ENCODE measurements at regions of chr5 and their contacts with region 1.

Region 1: DNA sequence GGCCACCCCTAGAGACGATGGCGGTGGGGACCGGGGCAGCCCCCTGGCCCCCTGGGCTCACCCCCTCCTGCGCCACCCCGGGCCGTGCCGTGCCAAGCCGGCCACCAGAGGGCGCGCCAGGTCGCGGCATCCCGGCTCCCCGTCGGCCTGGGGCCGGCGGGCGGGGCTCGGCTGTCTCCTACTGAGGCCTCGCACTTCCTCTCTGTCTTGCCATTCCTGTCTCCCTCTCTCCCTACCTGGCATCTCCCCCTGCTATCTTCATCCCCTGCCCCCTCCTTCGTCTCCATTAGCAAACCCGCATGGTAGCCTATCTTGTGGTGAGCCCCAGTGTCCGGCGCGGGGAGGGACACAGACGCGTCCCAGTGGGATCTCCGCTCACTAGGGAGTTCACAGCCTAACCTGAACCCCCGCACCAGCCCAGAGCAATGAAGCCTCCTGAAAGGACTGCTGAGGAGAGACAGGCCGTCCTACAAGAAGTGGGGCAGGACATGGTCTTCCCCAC is 29.8 kb upstream of the FABP6 start:
- DNase-seq: peak; percentile 21 to 30
- ATAC-seq: peak; percentile 83 to 84
- H3K4me3 ChIP-seq: peak overlapping the region; percentile 39 to 61 (median 55)
- H3K27ac ChIP-seq: no peak overlapping the region
- H3K4me1 ChIP-seq: peaks cover 0 to 4% of the 10 kb centered on the region in 2 donors
- H3K27me3 ChIP-seq: no peaks in the 10 kb centered on the region
- CTCF ChIP-seq: peak; percentile 72 to 94 (median 88)
- POLR2A ChIP-seq: no peak

Region 2: GRCh38 chr5:160390787-160391696 is 191.6 kb after region 1 on chr5:
- in situ Hi-C with region 1: no loop called
- intact Hi-C with region 1: loop called (anchors 2 kb)
- DNase-seq: no peak
- ATAC-seq: no peak
- H3K4me3 ChIP-seq: no peak overlapping the region
- H3K27ac ChIP-seq: no peak overlapping the region
- H3K4me1 ChIP-seq: peaks cover 0 to 9% of the 10 kb centered on the region in 2 donors
- H3K27me3 ChIP-seq: no peaks in the 10 kb centered on the region
- CTCF ChIP-seq: peak in 4 of 5 experiments; percentile 21 to 48 (median 34)
- POLR2A ChIP-seq: no peak

Measured in gastrocnemius medialis (tissue), 4 donors.